Heart left ventricle (tissue), 16 donors: ENCODE measurements at regions of chr1 and their contacts with region 1.

Region 1: DNA sequence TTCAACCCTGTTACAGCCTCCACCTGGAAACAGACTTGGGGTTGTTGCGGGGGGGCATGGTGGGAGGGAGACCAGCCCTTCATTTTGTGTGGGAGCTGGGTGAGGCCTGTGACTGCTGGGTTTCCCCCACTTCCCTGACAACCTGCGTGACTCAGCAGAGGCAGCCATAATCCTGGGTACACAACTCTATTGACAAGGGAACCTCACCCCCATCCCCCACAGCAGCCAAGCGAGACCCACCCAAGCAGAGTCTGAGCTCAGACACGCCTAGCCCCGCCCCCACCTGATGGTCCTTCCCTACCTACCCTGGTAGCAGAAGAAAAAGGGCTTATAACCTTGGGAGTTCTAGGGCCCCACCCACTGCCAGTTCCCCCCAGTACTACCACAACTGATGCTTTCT is 8.0 kb upstream of the CCDC190 start:
- DNase-seq: no peak
- ATAC-seq: no peak
- H3K4me3 ChIP-seq: no peak overlapping the region
- H3K27ac ChIP-seq: no peak overlapping the region
- H3K4me1 ChIP-seq: no peaks in the 10 kb centered on the region
- H3K27me3 ChIP-seq: peaks cover 0 to 4% (median 0%) of the 10 kb centered on the region in 9 donors
- CTCF ChIP-seq: no peak
- POLR2A ChIP-seq: no peak

Region 2: GRCh38 chr1:162663589-162664106 is 205.3 kb before region 1 on chr1:
- intact Hi-C with region 1: no loop called
- DNase-seq: peak in 1 of 5 donors; percentile 55
- ATAC-seq: peak in 3 of 4 donors; percentile 65 to 94 (median 81)
- H3K4me3 ChIP-seq: no peak overlapping the region
- H3K27ac ChIP-seq: peak overlapping the region in 3 of 12 donors; percentile 3 to 33 (median 6)
- H3K4me1 ChIP-seq: peaks cover 0 to 22% (median 6%) of the 10 kb centered on the region in 12 donors
- H3K27me3 ChIP-seq: no peaks in the 10 kb centered on the region
- CTCF ChIP-seq: no peak
- POLR2A ChIP-seq: no peak

Region 3: GRCh38 chr1:162690672-162691434 is 178.1 kb before region 1 on chr1:
- intact Hi-C with region 1: no loop called
- DNase-seq: peak in 3 of 5 donors; percentile 69 to 78 (median 75)
- ATAC-seq: peak; percentile 4 to 81 (median 66)
- H3K4me3 ChIP-seq: no peak overlapping the region
- H3K27ac ChIP-seq: peak overlapping the region in 11 of 12 donors; percentile 47 to 86 (median 57)
- H3K4me1 ChIP-seq: peaks cover 3 to 65% (median 32%) of the 10 kb centered on the region in 12 donors
- H3K27me3 ChIP-seq: no peaks in the 10 kb centered on the region
- CTCF ChIP-seq: no peak
- POLR2A ChIP-seq: no peak

Region 4: GRCh38 chr1:163321311-163322305 is 452.6 kb after region 1 on chr1 and contains the start of gene NUF2:
- intact Hi-C with region 1: loop called in 1 of 10 experiments (anchors 5 kb)
- DNase-seq: peak; percentile 97 to 99 (median 98)
- ATAC-seq: peak; percentile 99 to 100 (median 100)
- H3K4me3 ChIP-seq: peak within 1 kb of the TSS; percentile 59 to 85 (median 70)
- H3K27ac ChIP-seq: peak within 1 kb of the TSS in 11 of 12 donors; percentile 42 to 80 (median 75)
- H3K4me1 ChIP-seq: peaks cover 0 to 21% (median 15%) of the 10 kb centered on the region in 12 donors
- H3K27me3 ChIP-seq: no peaks in the 10 kb centered on the region
- CTCF ChIP-seq: peak in 3 of 12 donors; percentile 5 to 25 (median 8)
- POLR2A ChIP-seq: peak in 1 of 2 donors; percentile 44
- total RNA-seq, gene NUF2: 0.20 to 3.2 (median 0.71) TPM in 6 of 9 donors, not detected in the others